ENCODE measurements at regions of chr9 and their contacts with region 1.

Region 1: GRCh38 chr9:23979491-23979890 is 153.5 kb upstream of the ELAVL2 start:
- DNase-seq: no peak
- ATAC-seq: no peak
- H3K4me3 ChIP-seq: no peak overlapping the region
- H3K27ac ChIP-seq: no peak overlapping the region
- H3K4me1 ChIP-seq: no peaks in the 10 kb centered on the region
- H3K27me3 ChIP-seq: no peaks in the 10 kb centered on the region
- CTCF ChIP-seq: no peak

Region 2: GRCh38 chr9:23375511-23375910 is 604.0 kb before region 1 on chr9:
- CTCF ChIA-PET with region 1: no interaction called
- POLR2A ChIA-PET with region 1: no interaction called
- in situ Hi-C with region 1: no loop called
- intact Hi-C with region 1: no loop called
- DNase-seq: no peak
- ATAC-seq: no peak
- H3K4me3 ChIP-seq: no peak overlapping the region
- H3K27ac ChIP-seq: no peak overlapping the region
- H3K4me1 ChIP-seq: no peaks in the 10 kb centered on the region
- H3K27me3 ChIP-seq: no peaks in the 10 kb centered on the region
- CTCF ChIP-seq: no peak

Region 3: GRCh38 chr9:24007185-24007584 is 27.7 kb after region 1 on chr9:
- CTCF ChIA-PET with region 1: no interaction called
- POLR2A ChIA-PET with region 1: no interaction called
- in situ Hi-C with region 1: no loop called
- intact Hi-C with region 1: loop called (anchors 2 kb)
- DNase-seq: no peak
- ATAC-seq: no peak
- H3K4me3 ChIP-seq: no peak overlapping the region
- H3K27ac ChIP-seq: no peak overlapping the region
- H3K4me1 ChIP-seq: no peaks in the 10 kb centered on the region
- H3K27me3 ChIP-seq: no peaks in the 10 kb centered on the region
- CTCF ChIP-seq: no peak